ENCODE measurements at regions of chr7 and their contacts with region 1.

Region 1: DNA sequence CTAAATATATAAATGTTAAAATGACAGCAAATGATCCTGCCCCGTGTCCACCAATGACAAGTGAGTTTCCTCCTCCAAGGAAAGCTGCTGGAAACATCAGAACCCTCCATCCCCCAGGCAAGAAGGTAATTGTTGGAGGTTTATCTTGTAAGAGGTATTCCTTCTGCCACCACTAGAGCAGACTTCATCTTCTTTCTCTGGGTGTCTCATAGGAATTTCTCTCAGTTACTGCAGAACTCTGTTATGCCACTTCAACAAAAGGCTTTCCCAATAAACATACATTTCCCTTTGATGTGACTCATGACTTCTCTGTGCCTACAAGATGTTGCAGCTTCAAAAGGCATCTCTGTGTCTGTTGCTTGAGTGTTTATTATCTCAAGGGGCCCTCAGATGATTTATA is 279.1 kb downstream of the BMPER start:
- DNase-seq: no peak
- H3K4me3 ChIP-seq: no peak overlapping the region
- H3K27ac ChIP-seq: no peak overlapping the region
- H3K4me1 ChIP-seq: no peaks in the 10 kb centered on the region
- H3K27me3 ChIP-seq: no peaks in the 10 kb centered on the region
- CTCF ChIP-seq: no peak
- EP300 ChIP-seq: no peak
- POLR2A ChIP-seq: no peak

Region 2: DNA sequence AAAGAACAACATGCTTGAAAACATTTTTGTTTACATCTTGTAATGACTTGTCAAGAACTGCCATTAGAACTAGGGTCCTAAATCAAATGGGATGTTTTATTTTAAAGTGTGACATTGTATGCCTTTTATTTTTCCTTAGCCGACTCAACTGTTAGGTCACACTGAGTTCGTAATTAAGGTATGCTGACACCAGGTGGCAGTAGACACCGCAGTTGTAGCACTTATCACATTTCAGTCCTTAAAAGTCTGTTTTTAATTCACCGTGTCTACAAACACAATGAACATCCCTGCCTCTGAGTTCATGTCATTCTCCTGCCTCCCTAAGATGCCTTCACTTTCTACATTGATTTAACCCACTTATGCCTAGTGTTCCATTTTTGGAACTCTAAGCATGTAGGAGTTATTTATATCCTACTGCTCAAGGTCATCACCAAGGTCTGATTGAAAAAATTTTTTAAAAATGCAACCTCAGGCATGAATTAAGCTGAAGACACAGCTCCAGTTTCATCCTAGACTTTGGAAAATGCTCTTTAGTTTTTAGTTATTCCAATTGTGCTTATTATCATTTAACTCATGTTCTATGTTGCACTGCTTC is 93.0 kb before region 1 on chr7:
- in situ Hi-C with region 1: loop called in 1 of 4 experiments (anchors 25 kb)
- intact Hi-C with region 1: no loop called
- DNase-seq: peak; percentile 26
- H3K4me3 ChIP-seq: no peak overlapping the region
- H3K27ac ChIP-seq: no peak overlapping the region
- H3K4me1 ChIP-seq: no peaks in the 10 kb centered on the region
- H3K27me3 ChIP-seq: no peaks in the 10 kb centered on the region
- CTCF ChIP-seq: peak; percentile 29 to 43 (median 36)
- EP300 ChIP-seq: no peak
- POLR2A ChIP-seq: no peak